Heart left ventricle (tissue), 16 donors: ENCODE measurements at regions of chr1 and their contacts with region 1.

Region 1: GRCh38 chr1:191888985-191889622 is 269.2 kb upstream of the RGS18 start:
- DNase-seq: no peak
- ATAC-seq: peak in 2 of 4 donors; percentile 28 to 53
- H3K4me3 ChIP-seq: no peak overlapping the region
- H3K27ac ChIP-seq: no peak overlapping the region
- H3K4me1 ChIP-seq: no peaks in the 10 kb centered on the region
- H3K27me3 ChIP-seq: no peaks in the 10 kb centered on the region
- CTCF ChIP-seq: no peak
- POLR2A ChIP-seq: no peak

Region 2: DNA sequence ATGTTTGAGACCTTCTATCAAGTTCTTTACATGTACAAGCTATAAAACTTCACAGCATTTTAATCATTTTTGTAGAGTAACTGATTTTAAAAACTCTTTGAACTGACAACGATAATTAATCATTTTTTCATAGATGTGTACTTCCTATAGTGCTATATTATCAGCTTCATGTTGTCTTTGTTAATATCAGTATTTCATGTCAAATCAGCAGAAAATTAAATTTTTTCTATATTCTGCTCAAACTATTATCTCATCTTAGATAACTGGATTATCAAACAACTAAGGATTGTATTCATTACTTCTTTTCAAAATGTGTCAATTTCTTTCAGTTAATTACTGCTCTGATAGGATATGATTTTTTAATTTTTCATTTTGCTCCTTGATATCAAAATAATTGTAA is 54.6 kb after region 1 on chr1:
- intact Hi-C with region 1: loop called in 1 of 10 experiments (anchors 10 kb)
- DNase-seq: no peak
- ATAC-seq: no peak
- H3K4me3 ChIP-seq: no peak overlapping the region
- H3K27ac ChIP-seq: no peak overlapping the region
- H3K4me1 ChIP-seq: no peaks in the 10 kb centered on the region
- H3K27me3 ChIP-seq: no peaks in the 10 kb centered on the region
- CTCF ChIP-seq: no peak
- POLR2A ChIP-seq: no peak